GM10248 (cell line): ENCODE measurements at regions of chr17 and their contacts with region 1.

Region 1: DNA sequence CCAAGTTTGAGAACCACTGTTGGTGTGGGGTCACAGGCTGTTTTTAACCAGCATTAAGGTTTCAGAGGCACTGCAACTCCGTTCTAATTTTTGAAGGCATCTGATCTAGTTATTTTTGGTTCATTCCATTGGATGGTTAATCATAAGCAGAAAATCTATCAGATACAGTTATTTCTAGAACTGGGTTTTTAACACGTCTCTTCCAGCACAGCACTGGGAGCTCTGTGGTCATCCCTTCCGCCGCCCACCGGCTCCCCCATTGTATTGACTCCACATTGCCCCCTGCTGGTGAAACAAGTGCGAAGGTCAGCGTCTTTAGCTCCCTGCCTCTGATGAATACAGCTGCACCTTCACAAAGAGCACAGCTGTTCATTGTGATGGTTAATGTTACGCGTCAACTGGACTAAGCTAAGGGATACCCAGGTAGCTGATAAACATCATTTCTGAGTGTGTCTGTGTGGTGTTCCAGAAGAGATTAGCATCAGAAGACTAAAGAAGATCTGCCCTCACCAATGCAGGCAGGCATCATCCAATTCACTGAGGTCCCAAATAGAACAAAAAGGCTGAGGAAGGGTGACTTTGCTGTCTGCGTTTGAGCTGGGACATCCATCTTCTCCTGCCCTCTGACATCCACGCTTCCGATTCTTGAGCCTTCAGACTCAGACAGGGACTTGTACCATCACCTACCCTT is 8.5 kb downstream of the CCL18 start:
- DNase-seq: peak; percentile 77
- CTCF ChIP-seq: peak; percentile 67

Region 2: DNA sequence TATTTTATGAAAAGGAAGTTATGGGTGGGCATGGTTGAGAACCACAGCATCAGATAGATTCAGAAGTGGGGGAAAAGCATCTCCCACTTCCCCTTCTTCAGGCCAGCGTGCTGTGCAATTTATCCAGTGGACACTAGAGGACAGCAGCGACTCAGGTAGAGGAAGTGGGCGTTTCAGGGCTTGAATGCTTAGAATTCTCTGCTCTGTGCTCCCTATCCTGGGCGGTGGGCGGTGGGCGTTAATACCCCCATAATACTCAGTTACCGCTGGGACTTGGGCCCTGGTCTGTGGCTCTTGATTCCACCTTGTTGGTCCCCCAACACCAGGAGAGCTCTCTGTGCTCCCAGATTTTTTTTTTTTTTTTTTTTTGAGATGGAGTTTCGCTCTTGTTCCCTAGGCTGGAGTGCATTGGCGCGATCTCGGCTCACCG is 125.4 kb before region 1 on chr17:
- CTCF ChIA-PET with region 1: no interaction called
- POLR2A ChIA-PET with region 1: no interaction called
- DNase-seq: peak; percentile 60
- CTCF ChIP-seq: peak; percentile 90

Region 3: DNA sequence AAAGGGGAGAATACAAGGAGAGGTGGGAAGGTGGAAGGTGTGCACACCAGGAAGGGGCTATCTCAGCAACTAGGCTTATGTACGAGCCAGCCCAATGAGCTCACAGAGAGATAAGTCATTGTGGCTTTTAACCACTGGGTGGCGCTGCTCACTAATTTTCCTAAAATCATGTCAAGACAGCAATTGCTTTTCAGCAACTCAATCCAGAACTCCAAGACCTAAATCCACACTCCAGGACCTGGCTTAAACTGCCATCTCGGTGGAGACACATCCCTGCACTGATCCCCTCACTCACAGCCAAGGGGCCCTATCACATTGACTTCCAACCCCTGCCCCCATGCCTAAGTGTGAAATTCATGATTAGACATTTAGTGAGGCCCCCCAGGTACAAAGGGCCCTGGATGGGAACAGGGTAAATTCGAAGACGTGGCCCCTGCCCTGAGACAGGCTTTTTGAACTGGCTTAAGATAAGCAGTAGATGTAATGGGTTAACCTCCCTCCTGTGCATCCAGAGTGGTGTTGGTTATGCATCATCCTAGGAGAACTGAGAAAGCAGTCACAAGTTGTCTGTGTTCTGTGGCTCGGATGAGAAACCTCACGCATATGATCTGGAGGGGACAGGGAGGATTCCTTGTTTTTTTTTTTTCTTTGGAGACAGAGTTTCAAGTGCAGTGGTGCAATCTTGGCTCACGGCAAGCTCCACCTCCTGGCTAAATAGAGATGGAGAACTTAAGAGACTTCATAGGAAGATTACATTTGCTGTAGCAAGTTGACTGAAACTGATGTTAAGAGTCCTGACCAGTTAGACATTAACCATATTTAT is 102.8 kb before region 1 on chr17:
- CTCF ChIA-PET with region 1: interaction called, 44 read pairs
- POLR2A ChIA-PET with region 1: no interaction called
- DNase-seq: peak; percentile 70
- CTCF ChIP-seq: peak; percentile 85

Region 4: GRCh38 chr17:36004594-36005108 is 67.9 kb before region 1 on chr17:
- CTCF ChIA-PET with region 1: interaction called, 10 read pairs
- POLR2A ChIA-PET with region 1: no interaction called
- DNase-seq: no peak
- CTCF ChIP-seq: no peak

Region 5: DNA sequence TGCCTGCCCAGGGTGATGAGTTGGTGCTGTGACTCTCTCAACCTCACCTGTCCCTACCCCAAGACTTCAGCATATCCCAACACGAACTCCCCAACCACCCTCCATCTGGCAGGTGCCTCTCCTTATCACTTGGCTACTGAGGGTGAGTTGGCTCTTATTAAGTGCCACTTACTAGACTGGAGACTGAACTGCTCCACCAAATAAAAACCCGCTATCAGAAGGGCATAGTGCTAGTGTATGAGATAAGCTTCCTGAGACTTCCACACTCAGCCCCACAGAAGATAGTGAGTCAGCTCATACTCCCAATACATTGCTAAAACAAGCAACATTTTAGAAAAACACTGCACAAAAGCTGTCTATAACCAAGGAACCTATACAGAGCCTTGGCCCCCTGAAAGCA is 24.5 kb before region 1 on chr17:
- CTCF ChIA-PET with region 1: interaction called, 67 read pairs
- POLR2A ChIA-PET with region 1: no interaction called
- DNase-seq: no peak
- CTCF ChIP-seq: no peak

Region 6: GRCh38 chr17:36089888-36090836 is 17.6 kb after region 1 on chr17 and contains the start of gene CCL3:
- CTCF ChIA-PET with region 1: interaction called, 51 read pairs
- POLR2A ChIA-PET with region 1: interaction called, 4 read pairs
- DNase-seq: peak; percentile 56
- CTCF ChIP-seq: no peak

Region 7: DNA sequence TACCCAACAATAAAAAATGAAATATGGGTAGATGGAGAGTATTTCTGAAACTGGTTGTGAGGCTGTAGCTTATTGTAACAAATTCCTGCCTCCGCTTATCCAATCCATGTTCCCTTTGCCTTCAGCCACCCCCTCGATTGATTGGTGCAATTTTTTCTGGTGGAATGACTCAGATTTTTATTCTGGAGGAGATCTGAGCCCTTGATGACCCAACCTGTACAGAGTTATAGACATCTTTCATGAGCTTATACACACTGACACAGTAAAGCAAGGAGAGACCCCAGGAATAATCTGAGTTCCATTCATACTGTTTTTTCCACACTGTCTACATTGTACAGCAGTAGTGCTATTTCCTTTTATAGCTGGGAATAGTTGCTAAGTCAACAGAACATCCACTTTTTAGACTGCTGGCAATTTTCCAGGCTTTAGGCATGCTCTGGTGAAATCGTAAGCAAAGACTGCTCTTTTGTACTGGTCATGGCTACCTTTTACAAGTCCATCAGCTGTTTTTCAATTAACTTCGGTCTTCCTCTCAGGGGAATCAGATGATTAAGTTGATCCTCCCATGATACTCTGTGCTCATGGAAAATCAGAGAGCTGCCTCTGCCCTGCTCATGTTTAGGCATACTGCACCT is 61.1 kb after region 1 on chr17:
- CTCF ChIA-PET with region 1: interaction called, 20 read pairs
- POLR2A ChIA-PET with region 1: no interaction called
- DNase-seq: no peak
- CTCF ChIP-seq: no peak

Region 8: GRCh38 chr17:36722121-36722902 is 649.7 kb after region 1 on chr17:
- CTCF ChIA-PET with region 1: no interaction called
- POLR2A ChIA-PET with region 1: no interaction called
- DNase-seq: peak; percentile 88
- CTCF ChIP-seq: no peak